Dorsolateral prefrontal cortex (tissue), 120 donors: ENCODE measurements at regions of chr6 and their contacts with region 1.

Region 1: GRCh38 chr6:107423474-107423990 is 35.8 kb downstream of the PDSS2 start:
- DNase-seq: no peak
- H3K4me3 ChIP-seq: no peak overlapping the region
- H3K27ac ChIP-seq: no peak overlapping the region
- H3K27me3 ChIP-seq: no peaks in the 10 kb centered on the region
- CTCF ChIP-seq: no peak

Region 2: DNA sequence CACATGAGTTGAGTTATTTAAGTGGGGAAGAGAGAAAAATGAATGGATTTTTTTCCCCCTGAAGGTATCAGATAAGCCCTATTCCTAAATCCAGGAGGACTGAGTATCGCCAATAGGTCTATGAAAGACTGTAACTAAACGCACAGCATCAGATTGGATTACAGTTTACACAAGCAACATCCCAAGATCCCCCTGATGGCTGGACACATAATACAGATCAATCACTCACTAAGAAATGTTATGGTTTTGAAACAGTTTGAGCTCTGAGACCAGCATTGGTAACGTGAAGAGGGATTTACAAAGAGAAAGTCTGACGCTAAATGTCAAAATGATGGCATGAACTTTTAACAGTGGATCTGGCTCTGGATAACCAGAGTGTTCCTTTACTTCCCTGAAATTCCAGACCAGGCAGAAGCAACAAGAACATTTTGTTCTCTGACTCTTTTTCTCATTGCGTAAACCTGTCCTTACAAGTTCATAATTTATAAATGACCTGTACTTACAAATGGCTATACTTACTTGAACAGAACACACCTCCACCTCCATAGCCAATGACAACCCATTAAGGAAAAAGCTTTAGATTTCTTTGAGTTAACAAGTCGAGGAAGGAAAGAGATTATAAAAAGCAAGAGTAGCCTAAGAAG is 176.4 kb before region 1 on chr6:
- intact Hi-C with region 1: loop called in 1 of 2 experiments (anchors 5 kb)
- DNase-seq: no peak
- H3K4me3 ChIP-seq: no peak overlapping the region
- H3K27ac ChIP-seq: no peak overlapping the region
- H3K27me3 ChIP-seq: no peaks in the 10 kb centered on the region
- CTCF ChIP-seq: no peak

Region 3: DNA sequence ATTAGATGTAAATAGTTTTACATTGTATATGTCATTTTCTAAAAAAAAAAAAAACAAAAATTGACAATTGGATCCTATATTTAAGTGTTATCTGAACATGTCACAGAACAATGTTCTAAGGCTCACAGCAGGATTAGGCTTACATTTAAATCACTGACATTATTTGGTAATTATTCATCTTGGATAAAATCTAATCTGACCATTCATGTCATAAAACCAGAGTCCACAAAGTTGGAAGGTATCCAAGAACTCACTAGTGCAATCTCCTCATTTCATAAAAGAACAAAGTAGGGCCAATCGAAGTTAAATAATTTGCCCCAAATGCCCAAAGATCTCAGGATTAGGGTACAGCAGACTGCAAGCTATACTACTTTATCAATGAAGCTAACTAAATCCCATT is 37.2 kb before region 1 on chr6:
- intact Hi-C with region 1: no loop called
- DNase-seq: no peak
- H3K4me3 ChIP-seq: no peak overlapping the region
- H3K27ac ChIP-seq: no peak overlapping the region
- H3K27me3 ChIP-seq: no peaks in the 10 kb centered on the region
- CTCF ChIP-seq: no peak